ENCODE measurements at regions of chr20 and their contacts with region 1.

Region 1: GRCh38 chr20:12970372-12970821 is 38.4 kb upstream of the SPTLC3 start:
- DNase-seq: peak; percentile 16
- H3K4me3 ChIP-seq: no peak overlapping the region
- H3K27ac ChIP-seq: no peak overlapping the region
- H3K27me3 ChIP-seq: peaks cover 11% of the 10 kb centered on the region
- CTCF ChIP-seq: peak; percentile 72

Region 2: GRCh38 chr20:12925214-12925755 is 45.1 kb before region 1 on chr20:
- CTCF ChIA-PET with region 1: interaction called, 589 read pairs
- POLR2A ChIA-PET with region 1: no interaction called
- DNase-seq: peak; percentile 77
- H3K4me3 ChIP-seq: no peak overlapping the region
- H3K27ac ChIP-seq: no peak overlapping the region
- H3K27me3 ChIP-seq: peaks cover 18% of the 10 kb centered on the region
- CTCF ChIP-seq: peak; percentile 99

Region 3: GRCh38 chr20:12956303-12956702 is 14.1 kb before region 1 on chr20:
- CTCF ChIA-PET with region 1: interaction called, 20 read pairs
- POLR2A ChIA-PET with region 1: no interaction called
- DNase-seq: no peak
- H3K4me3 ChIP-seq: no peak overlapping the region
- H3K27ac ChIP-seq: no peak overlapping the region
- H3K27me3 ChIP-seq: no peaks in the 10 kb centered on the region
- CTCF ChIP-seq: no peak

Region 4: DNA sequence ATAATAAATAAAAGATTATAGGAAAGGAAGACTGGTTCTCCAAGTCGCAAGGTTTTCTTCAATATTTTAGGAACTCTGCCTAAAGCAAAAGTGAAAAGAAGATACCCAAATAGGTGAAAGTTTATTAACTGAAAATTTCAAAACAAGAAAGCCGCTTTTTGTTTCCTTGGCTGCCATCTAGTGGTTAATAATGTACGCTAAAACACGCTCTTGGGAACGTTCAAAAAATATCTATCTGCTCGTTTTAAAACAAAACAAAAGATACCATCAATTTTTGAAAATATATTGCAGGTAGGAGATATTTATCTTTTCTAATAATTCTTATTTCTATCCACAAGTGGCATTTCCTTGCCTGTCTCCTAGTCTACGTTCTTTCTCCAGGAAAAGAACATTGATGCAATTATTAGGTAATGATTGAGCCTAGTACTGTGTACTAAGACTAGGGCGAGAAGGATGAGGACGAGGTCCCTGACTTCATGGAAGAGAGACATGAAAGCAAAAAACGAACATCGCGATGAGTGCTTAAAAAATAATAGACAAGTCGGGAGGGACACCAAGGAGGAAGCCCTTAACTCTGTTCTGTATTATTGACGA is 135.6 kb after region 1 on chr20:
- CTCF ChIA-PET with region 1: interaction called, 134 read pairs
- POLR2A ChIA-PET with region 1: no interaction called
- DNase-seq: no peak
- H3K4me3 ChIP-seq: no peak overlapping the region
- H3K27ac ChIP-seq: no peak overlapping the region
- H3K27me3 ChIP-seq: no peaks in the 10 kb centered on the region
- CTCF ChIP-seq: peak; percentile 78

Region 5: GRCh38 chr20:13119583-13119982 is 149.2 kb after region 1 on chr20:
- CTCF ChIA-PET with region 1: interaction called, 16 read pairs
- POLR2A ChIA-PET with region 1: no interaction called
- DNase-seq: peak; percentile 7
- H3K4me3 ChIP-seq: no peak overlapping the region
- H3K27ac ChIP-seq: no peak overlapping the region
- H3K27me3 ChIP-seq: peaks cover 3% of the 10 kb centered on the region
- CTCF ChIP-seq: peak; percentile 93

Region 6: GRCh38 chr20:13800728-13801134 is 830.3 kb after region 1 on chr20:
- CTCF ChIA-PET with region 1: interaction called, 11 read pairs
- POLR2A ChIA-PET with region 1: no interaction called
- DNase-seq: peak; percentile 78
- H3K4me3 ChIP-seq: no peak overlapping the region
- H3K27ac ChIP-seq: no peak overlapping the region
- H3K27me3 ChIP-seq: no peaks in the 10 kb centered on the region
- CTCF ChIP-seq: no peak

Measured in AG04450 (cell line).